ENCODE measurements at regions of chr9 and their contacts with region 1.

Region 1: GRCh38 chr9:102049586-102050246 is 311.3 kb upstream of the GRIN3A start:
- DNase-seq: peak in 1 of 14 experiments; percentile 13
- ATAC-seq: no peak
- H3K4me3 ChIP-seq: no peak overlapping the region
- H3K4me3 Mint-ChIP-seq: no peak overlapping the region
- H3K27ac ChIP-seq: no peak overlapping the region
- H3K27ac Mint-ChIP-seq: no peak overlapping the region
- H3K4me1 ChIP-seq: no peaks in the 10 kb centered on the region
- H3K4me1 Mint-ChIP-seq: no peaks in the 10 kb centered on the region
- H3K27me3 ChIP-seq: no peaks in the 10 kb centered on the region
- H3K27me3 Mint-ChIP-seq: no peaks in the 10 kb centered on the region
- CTCF ChIP-seq: no peak

Region 2: DNA sequence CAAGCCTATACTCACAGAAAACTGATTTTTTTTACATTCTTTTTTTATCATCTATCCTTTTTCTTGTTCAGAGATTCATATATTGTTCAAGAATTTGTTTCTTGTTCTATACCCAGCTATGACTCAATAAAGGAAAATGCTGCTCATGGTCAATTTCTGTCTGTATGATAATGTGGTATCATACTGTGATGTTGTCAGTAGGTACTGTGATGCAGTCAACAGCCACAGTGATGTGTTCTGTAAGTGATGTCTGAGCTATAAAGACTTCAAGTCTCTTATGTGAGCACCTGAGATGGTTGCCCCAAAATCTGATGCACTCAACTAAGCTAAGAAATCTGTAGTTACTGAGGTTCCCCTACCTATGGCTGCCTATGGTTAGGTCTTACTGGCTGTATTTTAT is 17.1 kb before region 1 on chr9:
- CTCF ChIA-PET with region 1: no interaction called
- POLR2A ChIA-PET with region 1: no interaction called
- intact Hi-C with region 1: loop called in 1 of 2 experiments (anchors 1 kb)
- DNase-seq: no peak
- ATAC-seq: no peak
- H3K4me3 ChIP-seq: no peak overlapping the region
- H3K4me3 Mint-ChIP-seq: no peak overlapping the region
- H3K27ac ChIP-seq: no peak overlapping the region
- H3K27ac Mint-ChIP-seq: no peak overlapping the region
- H3K4me1 ChIP-seq: no peaks in the 10 kb centered on the region
- H3K4me1 Mint-ChIP-seq: no peaks in the 10 kb centered on the region
- H3K27me3 ChIP-seq: no peaks in the 10 kb centered on the region
- H3K27me3 Mint-ChIP-seq: no peaks in the 10 kb centered on the region
- CTCF ChIP-seq: no peak

Region 3: DNA sequence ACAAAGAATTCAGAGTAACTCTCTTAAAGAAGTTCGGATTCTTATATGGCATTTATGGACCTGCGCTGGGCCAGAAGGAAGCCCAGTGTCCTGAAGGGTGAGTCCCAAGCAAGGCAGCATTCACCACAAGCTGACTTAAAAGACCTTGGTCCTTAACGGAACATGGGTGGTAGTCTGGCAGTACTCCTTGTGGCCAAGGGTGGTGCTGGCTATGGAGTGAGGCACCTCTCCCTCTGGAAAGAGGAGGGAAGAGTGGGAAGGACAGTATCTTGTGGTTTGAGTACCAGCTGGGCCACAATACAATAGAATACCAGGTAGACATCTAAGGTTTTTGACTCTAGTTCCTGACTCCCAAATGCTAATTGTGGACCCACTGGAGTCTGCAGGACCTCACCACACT is 519.7 kb after region 1 on chr9:
- CTCF ChIA-PET with region 1: no interaction called
- POLR2A ChIA-PET with region 1: no interaction called
- intact Hi-C with region 1: no loop called
- DNase-seq: no peak
- ATAC-seq: no peak
- H3K4me3 ChIP-seq: no peak overlapping the region
- H3K4me3 Mint-ChIP-seq: no peak overlapping the region
- H3K27ac ChIP-seq: no peak overlapping the region
- H3K27ac Mint-ChIP-seq: no peak overlapping the region
- H3K4me1 ChIP-seq: no peaks in the 10 kb centered on the region
- H3K4me1 Mint-ChIP-seq: no peaks in the 10 kb centered on the region
- H3K27me3 ChIP-seq: no peaks in the 10 kb centered on the region
- H3K27me3 Mint-ChIP-seq: no peaks in the 10 kb centered on the region
- CTCF ChIP-seq: no peak